ENCODE measurements at regions of chr5 and their contacts with region 1.

Region 1: GRCh38 chr5:1703352-1704050 is 96.1 kb downstream of the MRPL36 start:
- DNase-seq: peak in 1 of 2 experiments; percentile 55
- H3K4me3 ChIP-seq: no peak overlapping the region
- H3K27ac ChIP-seq: no peak overlapping the region
- H3K4me1 ChIP-seq: peaks cover 0 to 10% (median under 1%) of the 10 kb centered on the region in 4 experiments; a peak in 2 of 7 replicates
- H3K27me3 ChIP-seq: peaks cover 0 to 2% (median 0%) of the 10 kb centered on the region in 4 experiments; a peak in 2 of 7 replicates
- CTCF ChIP-seq: peak; percentile 12 to 46 (median 21); a peak in 2 of 4 replicates
- EP300 ChIP-seq: no peak
- POLR2A ChIP-seq: no peak
- RAD21 ChIP-seq: peak; percentile 50 to 63

Region 2: GRCh38 chr5:1668141-1668721 is 35.3 kb before region 1 on chr5:
- CTCF ChIA-PET with region 1: interaction called, 17 read pairs
- POLR2A ChIA-PET with region 1: no interaction called
- DNase-seq: no peak
- H3K4me3 ChIP-seq: peak overlapping the region; percentile 39 to 69 (median 49); a peak in 6 of 8 replicates
- H3K27ac ChIP-seq: no peak overlapping the region
- H3K4me1 ChIP-seq: peaks cover 0 to 20% (median 8%) of the 10 kb centered on the region in 4 experiments; a peak in 5 of 7 replicates
- H3K27me3 ChIP-seq: peaks cover 2 to 36% (median 23%) of the 10 kb centered on the region in 4 experiments
- CTCF ChIP-seq: no peak
- EP300 ChIP-seq: no peak
- POLR2A ChIP-seq: no peak
- RAD21 ChIP-seq: no peak

Region 3: DNA sequence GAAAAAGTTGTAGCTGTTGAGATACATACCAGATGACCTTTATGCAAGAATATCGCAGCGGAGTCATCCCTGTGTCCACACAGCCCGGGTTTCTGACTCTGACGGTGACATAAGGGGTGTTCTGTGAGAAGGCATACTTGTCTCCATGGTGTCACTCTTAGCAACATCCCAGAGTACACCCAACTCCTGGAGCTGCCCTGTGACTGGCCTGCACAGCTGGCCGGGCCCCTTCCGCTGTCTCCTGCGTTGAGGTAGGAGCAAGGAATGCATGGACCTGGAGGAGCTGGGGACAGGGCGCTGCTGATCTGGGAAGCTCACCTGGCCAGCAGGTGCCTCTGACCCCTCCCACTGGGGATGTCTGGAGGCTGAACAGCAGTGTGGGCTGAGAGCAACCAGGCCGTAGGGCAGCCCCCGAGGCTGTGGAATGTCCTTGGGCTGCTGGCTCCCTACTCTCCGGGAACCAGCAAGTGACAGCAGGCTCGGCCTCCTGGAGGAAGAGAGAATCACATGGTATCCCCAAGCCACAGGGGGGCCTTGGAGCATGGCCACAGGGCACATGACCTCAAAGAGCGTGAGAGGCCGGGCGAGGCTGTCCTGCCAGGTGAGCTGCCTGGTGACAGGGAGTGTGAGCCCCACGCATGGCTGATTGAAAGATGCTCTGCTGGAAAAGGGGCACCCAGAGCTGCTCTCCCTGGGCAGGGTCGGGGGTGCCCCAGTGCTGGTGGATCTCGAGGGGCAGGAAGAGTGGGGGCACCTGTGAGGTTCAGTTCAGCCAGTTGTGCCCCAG is 17.3 kb before region 1 on chr5:
- CTCF ChIA-PET with region 1: interaction called, 10 read pairs
- POLR2A ChIA-PET with region 1: no interaction called
- DNase-seq: peak in 1 of 2 experiments; percentile 43
- H3K4me3 ChIP-seq: no peak overlapping the region
- H3K27ac ChIP-seq: no peak overlapping the region
- H3K4me1 ChIP-seq: no peaks in the 10 kb centered on the region
- H3K27me3 ChIP-seq: no peaks in the 10 kb centered on the region
- CTCF ChIP-seq: no peak
- EP300 ChIP-seq: no peak
- POLR2A ChIP-seq: no peak
- RAD21 ChIP-seq: no peak

Region 4: GRCh38 chr5:1910081-1910760 is 206.7 kb after region 1 on chr5:
- CTCF ChIA-PET with region 1: no interaction called
- POLR2A ChIA-PET with region 1: no interaction called
- DNase-seq: no peak
- H3K4me3 ChIP-seq: no peak overlapping the region
- H3K27ac ChIP-seq: no peak overlapping the region
- H3K4me1 ChIP-seq: no peaks in the 10 kb centered on the region
- H3K27me3 ChIP-seq: no peaks in the 10 kb centered on the region
- CTCF ChIP-seq: no peak
- EP300 ChIP-seq: no peak
- POLR2A ChIP-seq: no peak
- RAD21 ChIP-seq: no peak